Heart right ventricle (tissue), 16 donors: ENCODE measurements at regions of chr1 and their contacts with region 1.

Region 1: GRCh38 chr1:3727042-3727824 is 25.0 kb upstream of the CCDC27 start:
- DNase-seq: peak in 1 of 2 donors; percentile 21
- ATAC-seq: peak in 3 of 8 donors; percentile 14 to 22 (median 16)
- H3K4me3 ChIP-seq: no peak overlapping the region
- H3K27ac ChIP-seq: no peak overlapping the region
- H3K4me1 ChIP-seq: peaks cover 0 to 13% (median 7%) of the 10 kb centered on the region in 9 donors
- H3K27me3 ChIP-seq: peaks cover 0 to 29% (median 14%) of the 10 kb centered on the region in 7 donors
- CTCF ChIP-seq: peak in 8 of 9 donors; percentile 12 to 54 (median 36)

Region 2: DNA sequence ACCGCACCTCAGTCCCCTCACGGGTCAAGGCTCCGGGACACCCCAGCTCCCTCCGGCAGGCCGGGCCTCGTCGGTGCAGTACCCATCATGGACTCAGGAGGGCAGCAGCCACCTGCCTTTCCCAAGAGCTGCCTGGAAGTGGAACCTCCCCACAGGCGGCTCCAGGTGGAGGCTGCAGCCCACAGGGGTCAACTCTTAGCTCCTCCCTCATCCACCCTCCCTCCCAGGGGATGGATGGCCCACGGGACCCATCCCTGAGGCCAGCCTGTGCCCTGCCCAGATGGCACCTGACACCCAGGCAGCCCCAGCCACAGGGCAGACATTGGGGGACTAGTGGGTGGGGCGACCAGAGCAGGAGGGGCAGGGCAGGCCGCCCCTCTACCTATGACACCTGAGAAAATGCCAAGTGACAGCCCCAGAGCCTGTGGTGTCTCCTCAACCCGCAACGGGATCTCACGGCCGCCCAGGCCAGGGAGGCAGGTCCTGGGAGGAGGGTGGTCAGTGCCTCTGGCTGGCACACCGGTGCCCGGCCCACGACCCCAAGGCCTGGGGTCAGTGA is 274.0 kb before region 1 on chr1:
- intact Hi-C with region 1: loop called in 1 of 10 experiments (anchors 10 kb)
- DNase-seq: peak; percentile 66 to 79
- ATAC-seq: peak; percentile 68 to 90 (median 81)
- H3K4me3 ChIP-seq: no peak overlapping the region
- H3K27ac ChIP-seq: no peak overlapping the region
- H3K4me1 ChIP-seq: peaks cover 15 to 33% (median 25%) of the 10 kb centered on the region in 9 donors
- H3K27me3 ChIP-seq: peaks cover 3 to 46% (median 25%) of the 10 kb centered on the region in 7 donors
- CTCF ChIP-seq: peak; percentile 90 to 97 (median 96)

Region 3: GRCh38 chr1:3491291-3492246 is 235.7 kb before region 1 on chr1:
- intact Hi-C with region 1: loop called in 2 of 10 experiments (anchors 5 to 10 kb)
- DNase-seq: peak; percentile 72 to 86
- ATAC-seq: peak; percentile 79 to 91 (median 83)
- H3K4me3 ChIP-seq: peak overlapping the region in 1 of 10 donors; percentile 1
- H3K27ac ChIP-seq: no peak overlapping the region
- H3K4me1 ChIP-seq: peaks cover 0 to 9% (median 6%) of the 10 kb centered on the region in 9 donors
- H3K27me3 ChIP-seq: peaks cover 0 to 7% (median 0%) of the 10 kb centered on the region in 7 donors
- CTCF ChIP-seq: peak; percentile 99 to 100 (median 100)

Region 4: DNA sequence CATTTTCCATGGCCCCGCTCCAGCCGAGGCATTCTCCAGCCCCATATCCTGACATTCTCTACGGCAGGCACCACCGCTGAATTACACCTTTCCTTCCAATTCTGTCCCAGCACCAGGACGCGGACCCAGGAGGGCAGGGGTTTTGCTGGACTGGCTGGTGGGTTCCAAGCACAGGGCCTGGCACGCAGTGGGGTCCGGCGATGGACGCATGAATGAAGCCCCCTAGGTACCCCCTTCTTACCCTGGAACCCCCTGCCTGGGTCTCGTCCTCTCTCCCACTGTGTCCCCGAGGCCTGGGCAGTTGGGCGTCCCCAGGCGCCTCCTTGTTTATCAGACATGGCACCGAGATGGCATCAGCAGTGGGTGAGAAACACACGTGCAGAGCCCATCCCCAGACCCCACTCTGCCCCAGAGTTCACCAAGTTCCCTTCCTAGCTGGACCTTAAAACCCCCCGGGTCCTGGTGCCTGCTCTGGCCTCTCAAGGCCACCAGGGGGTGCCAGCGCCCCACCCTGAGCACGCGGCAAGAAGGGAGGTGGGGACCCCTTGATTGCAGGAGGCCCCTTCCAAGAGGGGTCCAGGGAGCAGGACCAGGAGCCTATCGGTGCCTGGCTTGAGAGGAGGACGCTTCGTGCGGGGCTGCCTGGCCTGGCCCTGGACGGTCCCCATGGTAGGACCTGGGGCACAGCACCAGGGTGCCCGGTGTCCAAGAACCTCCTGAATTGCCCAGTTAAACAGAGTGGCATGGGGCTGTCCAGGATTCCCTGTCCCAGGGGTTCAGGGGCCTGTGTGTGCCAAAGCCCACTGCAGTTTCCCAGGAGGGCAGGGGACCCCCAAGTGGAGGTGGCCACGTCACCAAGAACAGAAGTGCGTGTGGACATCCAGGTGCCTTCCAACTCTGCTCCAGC is 162.1 kb before region 1 on chr1:
- intact Hi-C with region 1: loop called in 1 of 10 experiments (anchors 10 kb)
- DNase-seq: no peak
- ATAC-seq: peak in 7 of 8 donors; percentile 30 to 60 (median 47)
- H3K4me3 ChIP-seq: no peak overlapping the region
- H3K27ac ChIP-seq: no peak overlapping the region
- H3K4me1 ChIP-seq: peaks cover 0 to 10% (median 0%) of the 10 kb centered on the region in 9 donors
- H3K27me3 ChIP-seq: peaks cover 0 to 18% (median 0%) of the 10 kb centered on the region in 7 donors
- CTCF ChIP-seq: peak; percentile 45 to 96 (median 89)

Region 5: DNA sequence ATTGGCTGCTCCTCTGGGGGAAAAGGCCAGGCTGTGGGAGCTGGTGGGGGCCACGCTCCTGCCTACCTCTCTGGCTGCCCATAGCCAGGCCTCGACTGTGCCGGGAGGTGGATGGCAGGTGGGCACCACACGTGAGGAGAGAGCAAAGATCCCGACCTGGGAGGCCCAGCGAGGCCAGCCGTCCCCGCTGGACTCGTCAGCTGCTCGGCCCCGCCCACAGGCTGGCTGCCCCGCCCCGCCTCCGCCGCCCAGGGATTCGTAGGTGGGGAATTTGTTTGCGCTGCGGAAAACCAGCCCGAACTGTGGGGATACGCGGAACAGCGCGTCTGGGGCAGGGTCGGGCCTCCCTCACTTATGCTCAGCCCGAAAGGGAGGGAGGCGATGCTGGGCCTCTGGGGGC is 43.2 kb before region 1 on chr1:
- intact Hi-C with region 1: no loop called
- DNase-seq: no peak
- ATAC-seq: no peak
- H3K4me3 ChIP-seq: no peak overlapping the region
- H3K27ac ChIP-seq: no peak overlapping the region
- H3K4me1 ChIP-seq: peaks cover 0 to 9% (median 0%) of the 10 kb centered on the region in 9 donors
- H3K27me3 ChIP-seq: peaks cover 0 to 26% (median 16%) of the 10 kb centered on the region in 7 donors
- CTCF ChIP-seq: no peak

Region 6: GRCh38 chr1:3695326-3696217 is 31.7 kb before region 1 on chr1:
- intact Hi-C with region 1: loop called in 5 of 10 experiments (anchors 1 to 2 kb)
- DNase-seq: peak; percentile 35 to 62
- ATAC-seq: peak; percentile 54 to 91 (median 81)
- H3K4me3 ChIP-seq: peak overlapping the region in 4 of 10 donors; percentile 3 to 39 (median 12)
- H3K27ac ChIP-seq: no peak overlapping the region
- H3K4me1 ChIP-seq: peaks cover 0 to 8% (median 0%) of the 10 kb centered on the region in 9 donors
- H3K27me3 ChIP-seq: peaks cover 0 to 48% (median 37%) of the 10 kb centered on the region in 7 donors
- CTCF ChIP-seq: peak; percentile 74 to 87 (median 79)

Region 7: DNA sequence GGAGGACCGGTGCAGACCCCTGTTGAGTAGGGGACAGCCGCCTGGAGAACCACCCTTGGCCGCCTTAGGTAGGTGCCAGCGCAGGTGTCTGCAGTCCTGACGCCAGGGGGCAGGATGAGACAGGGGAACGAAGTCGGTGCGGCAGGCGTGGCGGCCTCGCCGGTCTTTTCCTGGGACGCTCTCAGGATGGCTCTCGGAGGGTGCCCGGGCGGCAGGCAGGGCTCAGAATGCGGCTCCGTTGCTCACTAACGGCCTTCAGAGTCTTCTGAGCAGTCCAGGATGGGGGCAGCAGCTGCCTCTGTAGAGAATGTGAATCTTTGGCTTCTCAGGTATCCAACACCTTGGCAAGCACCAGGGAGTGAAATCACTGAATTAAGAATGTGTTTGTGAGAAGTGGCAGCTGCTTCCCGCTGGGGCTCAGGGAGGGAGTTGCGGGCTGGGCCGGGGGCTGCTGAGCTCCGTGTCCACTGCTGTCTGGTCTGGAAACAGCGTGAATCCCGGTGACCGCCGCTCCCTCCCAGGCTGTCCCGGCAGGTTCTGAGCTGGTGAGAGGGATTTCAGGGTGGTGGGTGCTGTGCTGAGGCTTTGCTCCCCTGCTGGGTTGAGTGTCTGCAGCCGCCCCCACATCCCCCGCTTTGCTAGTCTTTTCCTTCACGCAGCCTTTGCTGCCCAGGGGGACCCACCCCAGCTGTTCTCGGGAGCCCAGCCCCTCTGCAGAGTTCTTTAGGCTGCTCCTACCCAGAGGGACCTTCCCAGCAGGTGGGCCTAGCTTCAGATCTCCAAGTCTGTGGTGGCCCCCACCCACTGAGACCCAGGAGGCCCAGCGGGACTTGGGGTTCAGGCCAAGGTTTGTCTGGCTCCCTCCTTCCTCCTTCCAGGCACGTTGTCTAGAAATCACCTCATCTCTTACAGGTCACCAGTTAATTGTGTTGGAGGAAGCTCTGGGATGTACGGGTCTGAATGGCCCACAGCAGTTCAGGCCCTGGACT is 183.9 kb after region 1 on chr1:
- intact Hi-C with region 1: no loop called
- DNase-seq: peak; percentile 52 to 70
- ATAC-seq: peak in 7 of 8 donors; percentile 41 to 79 (median 72)
- H3K4me3 ChIP-seq: no peak overlapping the region
- H3K27ac ChIP-seq: no peak overlapping the region
- H3K4me1 ChIP-seq: peaks cover 0 to 5% (median 0%) of the 10 kb centered on the region in 9 donors
- H3K27me3 ChIP-seq: peaks cover 0 to 44% (median 30%) of the 10 kb centered on the region in 7 donors
- CTCF ChIP-seq: peak; percentile 34 to 75 (median 70)